HCT116 (cell line): ENCODE measurements at regions of chr6 and their contacts with region 1.

Region 1: GRCh38 chr6:77055711-77056110 is 407.6 kb downstream of the HTR1B start:
- DNase-seq: no peak
- ATAC-seq: no peak
- H3K4me3 ChIP-seq: no peak overlapping the region
- H3K27ac ChIP-seq: no peak overlapping the region
- H3K4me1 ChIP-seq: no peaks in the 10 kb centered on the region
- H3K27me3 ChIP-seq: no peaks in the 10 kb centered on the region
- CTCF ChIP-seq: no peak
- POLR2A ChIP-seq: no peak
- RAD21 ChIP-seq: no peak

Region 2: DNA sequence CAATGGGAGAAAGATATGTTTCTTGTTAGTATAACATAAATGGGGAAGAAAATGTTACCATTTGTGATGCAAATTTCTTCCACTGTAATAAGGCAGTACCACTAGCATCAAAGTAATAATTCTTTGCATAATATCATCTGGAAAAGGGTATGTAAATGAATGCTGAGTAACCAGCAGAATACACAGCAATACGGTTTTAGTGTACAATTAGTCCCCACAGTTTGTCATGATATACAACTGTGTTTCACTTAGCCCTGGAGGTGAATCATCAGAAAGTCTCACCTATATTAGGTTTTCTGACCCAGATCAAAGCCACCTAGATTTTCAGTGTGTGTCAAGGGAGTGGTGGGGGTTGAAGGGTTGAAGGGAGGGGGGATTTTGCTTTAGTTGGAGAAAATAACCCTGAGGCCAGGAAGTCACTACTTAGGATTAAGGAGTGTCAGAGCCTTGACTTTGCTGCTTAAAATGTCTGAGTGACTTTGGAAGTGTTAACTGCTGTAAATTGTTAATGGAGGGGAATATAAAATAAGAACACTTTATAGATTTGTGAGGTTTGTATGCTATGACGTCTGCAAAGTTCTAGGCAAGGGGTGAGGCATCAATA is 588.5 kb after region 1 on chr6:
- CTCF ChIA-PET with region 1: no interaction called
- POLR2A ChIA-PET with region 1: no interaction called
- RAD21 ChIA-PET with region 1: no interaction called
- intact Hi-C with region 1: loop called (anchors 5 kb)
- DNase-seq: no peak
- ATAC-seq: no peak
- H3K4me3 ChIP-seq: no peak overlapping the region
- H3K27ac ChIP-seq: no peak overlapping the region
- H3K4me1 ChIP-seq: no peaks in the 10 kb centered on the region
- H3K27me3 ChIP-seq: no peaks in the 10 kb centered on the region
- CTCF ChIP-seq: no peak
- POLR2A ChIP-seq: no peak
- RAD21 ChIP-seq: no peak